ENCODE measurements at regions of chr1 and their contacts with region 1.

Region 1: GRCh38 chr1:237851210-237851845 is 39.4 kb downstream of the ZP4 start:
- DNase-seq: peak; percentile 21
- H3K4me3 Mint-ChIP-seq: no peak overlapping the region
- H3K27ac Mint-ChIP-seq: no peak overlapping the region
- H3K4me1 Mint-ChIP-seq: no peaks in the 10 kb centered on the region
- H3K27me3 Mint-ChIP-seq: no peaks in the 10 kb centered on the region

Region 2: GRCh38 chr1:237570530-237570929 is 280.8 kb before region 1 on chr1:
- CTCF ChIA-PET with region 1: no interaction called
- DNase-seq: no peak
- H3K4me3 Mint-ChIP-seq: no peak overlapping the region
- H3K27ac Mint-ChIP-seq: no peak overlapping the region
- H3K4me1 Mint-ChIP-seq: no peaks in the 10 kb centered on the region
- H3K27me3 Mint-ChIP-seq: no peaks in the 10 kb centered on the region

Region 3: DNA sequence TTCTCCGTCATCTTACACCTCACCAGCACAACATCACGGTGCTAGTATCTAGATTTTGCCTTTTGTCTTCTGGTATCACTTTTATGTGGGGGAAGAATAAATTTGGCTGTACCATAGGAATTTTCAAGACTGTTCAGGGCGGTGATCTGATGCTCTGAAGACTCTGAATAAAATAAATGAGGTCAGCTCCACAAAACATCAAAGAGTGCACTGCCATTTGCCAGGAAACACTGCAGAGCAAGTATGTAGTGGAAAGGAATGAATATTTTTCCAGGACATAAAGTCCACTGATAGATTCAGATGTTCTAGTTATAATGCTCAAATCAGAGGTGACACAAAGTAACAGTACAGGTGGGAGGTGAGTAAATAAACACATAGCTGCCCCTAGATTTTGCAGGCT is 16.9 kb before region 1 on chr1:
- CTCF ChIA-PET with region 1: no interaction called
- DNase-seq: no peak
- H3K4me3 Mint-ChIP-seq: no peak overlapping the region
- H3K27ac Mint-ChIP-seq: no peak overlapping the region
- H3K4me1 Mint-ChIP-seq: no peaks in the 10 kb centered on the region
- H3K27me3 Mint-ChIP-seq: no peaks in the 10 kb centered on the region

Region 4: DNA sequence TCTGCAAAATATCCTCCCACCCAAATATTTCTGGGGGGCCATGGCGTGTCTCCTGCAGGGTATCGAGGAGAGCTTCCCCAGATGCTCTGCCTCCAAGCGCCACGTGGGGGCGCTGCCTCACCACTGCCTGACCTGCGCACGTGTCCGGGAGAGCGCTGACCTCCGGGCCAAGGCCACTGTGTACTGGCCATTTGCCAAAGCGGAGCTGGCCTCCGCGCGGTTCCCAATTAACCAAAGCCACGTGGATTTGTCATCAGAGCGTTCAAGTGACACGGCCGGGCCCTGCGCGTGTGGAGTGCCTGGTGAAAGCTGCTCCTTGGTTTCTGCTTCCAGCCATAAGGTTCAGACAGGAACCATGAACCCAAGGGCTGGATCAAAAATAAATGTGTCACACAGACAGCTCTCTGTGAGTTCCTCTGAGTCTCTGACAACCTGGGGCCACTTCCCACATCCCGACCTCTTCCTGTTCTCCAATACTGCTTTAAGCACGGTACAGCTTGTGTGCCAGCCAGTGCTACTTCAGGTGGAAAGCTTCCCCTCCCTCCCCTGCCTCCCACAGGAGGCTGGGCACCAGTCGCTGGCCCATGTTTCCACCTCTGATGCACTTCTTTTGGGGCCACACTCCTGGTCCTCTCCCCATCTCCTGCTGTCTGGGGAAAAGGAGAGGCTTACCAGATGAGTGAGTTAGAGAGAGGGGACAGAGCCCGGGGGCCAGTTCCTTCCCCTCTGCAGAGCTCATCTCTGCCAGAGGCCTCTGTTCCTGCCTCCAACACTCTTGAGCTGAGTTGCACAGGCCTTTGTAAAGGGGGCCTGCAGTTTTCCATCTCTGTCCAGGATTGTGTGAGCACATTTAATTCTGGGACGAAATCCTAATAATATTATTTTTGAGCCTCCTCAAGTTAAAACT is 13.3 kb after region 1 on chr1:
- CTCF ChIA-PET with region 1: interaction called, 13 read pairs
- DNase-seq: no peak
- H3K4me3 Mint-ChIP-seq: no peak overlapping the region
- H3K27ac Mint-ChIP-seq: no peak overlapping the region
- H3K4me1 Mint-ChIP-seq: no peaks in the 10 kb centered on the region
- H3K27me3 Mint-ChIP-seq: peaks cover 5% of the 10 kb centered on the region

Measured in activated naive CD4-positive, alpha-beta T cell treated with anti-CD3 and anti-CD28 coated beads, Interleukin-2, amount 10 ng/mL, durations not matched to agents 7 days and 5 days (primary cell).